ENCODE measurements at regions of chr14 and their contacts with region 1.

Region 1: GRCh38 chr14:65412032-65412846 is at the start of gene FUT8:
- DNase-seq: peak; percentile 88 to 97 (median 94)
- H3K4me3 ChIP-seq: peak within 1 kb of the TSS; percentile 66 to 99 (median 91)
- H3K27ac ChIP-seq: peak within 1 kb of the TSS; percentile 88 to 100 (median 98)
- H3K27me3 ChIP-seq: no peaks in the 10 kb centered on the region
- CTCF ChIP-seq: peak; percentile 17 to 85 (median 72)
- total RNA-seq, gene FUT8: 73.3 to 174 (median 107) TPM

Region 2: GRCh38 chr14:64986578-64987571 is 425.4 kb before region 1 on chr14 and contains the start of gene FNTB:
- intact Hi-C with region 1: loop called in 1 of 2 experiments (anchors 5 kb)
- DNase-seq: peak; percentile 87 to 97 (median 96)
- H3K4me3 ChIP-seq: peak within 1 kb of the TSS; percentile 51 to 97 (median 85)
- H3K27ac ChIP-seq: peak within 1 kb of the TSS; percentile 72 to 98 (median 91)
- H3K27me3 ChIP-seq: no peaks in the 10 kb centered on the region
- CTCF ChIP-seq: peak; percentile 67 to 99 (median 94)
- total RNA-seq, gene FNTB: 19.3 to 93.3 (median 34.4) TPM

Region 3: GRCh38 chr14:65164068-65164824 is 248.0 kb before region 1 on chr14:
- intact Hi-C with region 1: loop called in 1 of 2 experiments (anchors 1 kb)
- DNase-seq: peak in 1 of 10 donors; percentile 24
- H3K4me3 ChIP-seq: no peak overlapping the region
- H3K27ac ChIP-seq: peak overlapping the region in 6 of 59 donors; percentile 1 to 47 (median 42)
- H3K27me3 ChIP-seq: no peaks in the 10 kb centered on the region
- CTCF ChIP-seq: peak; percentile 56 to 95 (median 78)

Region 4: DNA sequence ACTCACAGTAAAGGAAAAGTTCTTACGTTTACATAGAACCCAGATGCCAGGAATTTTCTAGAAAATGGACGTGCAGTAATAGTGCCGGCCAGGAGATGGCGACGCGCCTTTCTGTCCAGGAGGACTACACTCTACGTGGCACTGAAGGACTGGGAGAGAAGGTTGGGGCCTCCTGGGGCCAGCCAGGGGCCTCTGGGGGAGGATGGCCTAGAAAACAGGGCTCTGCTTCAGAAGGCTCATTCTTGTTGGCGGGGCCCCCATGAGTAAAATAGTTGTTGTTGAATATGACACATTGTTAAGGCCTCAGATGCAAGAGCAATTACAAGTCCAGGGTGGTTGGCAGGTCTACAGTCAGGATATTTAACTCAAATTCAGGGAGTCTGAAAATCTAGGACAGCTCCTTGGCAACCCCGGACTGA is 189.8 kb before region 1 on chr14:
- intact Hi-C with region 1: loop called (anchors 2 to 5 kb)
- DNase-seq: peak in 7 of 10 donors; percentile 48 to 72 (median 64)
- H3K4me3 ChIP-seq: no peak overlapping the region
- H3K27ac ChIP-seq: peak overlapping the region in 58 of 59 donors; percentile 6 to 100 (median 98)
- H3K27me3 ChIP-seq: no peaks in the 10 kb centered on the region
- CTCF ChIP-seq: peak; percentile 41 to 83 (median 69)

Region 5: DNA sequence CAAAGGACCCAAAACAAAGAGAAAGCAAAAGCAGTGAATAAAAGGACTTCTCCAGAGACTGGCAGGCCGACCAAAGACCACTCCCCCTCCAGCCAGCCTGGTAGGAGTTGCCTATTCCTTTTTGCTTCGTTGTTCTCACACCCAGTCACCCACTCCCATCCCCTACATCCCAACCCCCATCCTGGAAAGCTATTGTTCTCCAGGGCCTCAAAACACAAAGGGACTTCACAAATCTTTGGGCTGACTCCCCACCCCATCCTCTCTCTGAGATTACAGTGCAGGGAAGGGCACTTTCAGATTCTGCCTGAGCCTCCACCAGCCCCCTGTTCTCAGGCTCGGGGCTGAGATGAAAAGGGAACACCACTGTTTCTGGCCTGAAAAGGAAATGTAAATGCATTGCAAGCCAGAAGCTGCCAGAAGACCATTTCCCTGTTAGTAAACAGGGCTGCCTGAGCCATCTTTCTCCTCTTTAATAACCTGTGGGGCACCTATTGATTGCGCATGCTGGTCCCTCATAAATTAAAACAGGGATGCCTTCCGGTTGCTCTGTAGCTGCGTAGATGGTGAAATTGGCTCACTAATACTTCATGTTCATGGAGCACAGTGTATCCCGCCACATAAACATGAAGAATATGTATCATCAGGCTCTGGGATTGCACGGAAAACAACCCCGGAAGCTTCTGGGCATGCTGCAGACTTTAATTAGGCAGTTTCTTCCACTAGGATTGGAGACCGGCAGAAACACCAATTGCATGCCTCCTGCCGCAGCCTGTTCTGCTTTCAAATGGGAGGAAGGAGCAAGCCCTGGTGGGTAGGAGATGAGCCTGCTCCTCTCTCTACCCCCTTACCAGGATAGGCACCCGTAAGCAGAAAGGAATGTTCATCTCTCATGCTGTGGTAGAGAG is 130.0 kb before region 1 on chr14:
- intact Hi-C with region 1: loop called (anchors 1 kb)
- DNase-seq: peak; percentile 17 to 88 (median 80)
- H3K4me3 ChIP-seq: peak overlapping the region; percentile 25 to 69 (median 47)
- H3K27ac ChIP-seq: peak overlapping the region; percentile 83 to 100 (median 96)
- H3K27me3 ChIP-seq: no peaks in the 10 kb centered on the region
- CTCF ChIP-seq: peak in 10 of 56 donors; percentile 4 to 29 (median 10)

Region 6: DNA sequence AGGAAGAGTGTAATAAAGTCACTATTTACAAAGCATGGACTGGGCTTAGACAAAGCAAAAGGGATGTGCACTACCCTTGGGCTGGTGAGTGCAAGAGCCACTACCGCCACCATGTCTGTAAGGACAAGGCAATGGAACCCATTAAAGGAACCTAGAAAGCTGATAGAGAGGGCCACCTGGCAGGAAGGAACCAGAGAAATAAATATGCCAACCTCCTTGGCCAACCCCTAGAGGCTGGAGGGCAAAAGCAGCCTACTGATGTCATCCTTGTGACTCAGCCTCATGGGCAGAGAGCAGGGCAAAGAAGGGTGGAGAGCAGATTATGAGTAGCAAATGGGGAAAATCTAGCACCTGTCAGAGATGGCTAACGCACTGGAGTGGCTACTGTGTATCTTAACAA is 59.2 kb before region 1 on chr14:
- intact Hi-C with region 1: no loop called
- DNase-seq: no peak
- H3K4me3 ChIP-seq: no peak overlapping the region
- H3K27ac ChIP-seq: peak overlapping the region in 5 of 59 donors; percentile 2 to 54 (median 11)
- H3K27me3 ChIP-seq: no peaks in the 10 kb centered on the region
- CTCF ChIP-seq: no peak

Region 7: DNA sequence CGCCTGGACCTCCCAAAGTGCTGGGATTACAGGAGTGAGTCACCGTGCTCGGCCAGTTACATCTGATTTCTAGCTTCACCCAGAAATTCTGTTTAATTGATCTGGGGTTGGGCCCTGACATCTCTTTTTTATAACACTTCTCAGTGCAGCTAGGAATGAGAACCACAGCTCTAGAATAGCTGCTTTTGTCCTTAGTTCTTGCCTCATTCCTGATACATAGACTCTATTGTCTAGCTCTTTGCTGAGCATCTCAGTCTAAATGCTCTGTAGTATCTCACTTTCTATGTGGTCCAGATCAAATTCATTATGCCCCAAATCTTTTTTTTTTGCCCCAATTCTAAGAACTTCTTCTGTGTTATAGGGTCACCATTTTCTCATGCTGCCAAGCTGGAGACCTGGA is 29.7 kb before region 1 on chr14:
- intact Hi-C with region 1: no loop called
- DNase-seq: no peak
- H3K4me3 ChIP-seq: peak overlapping the region in 1 of 59 donors; percentile 11
- H3K27ac ChIP-seq: peak overlapping the region in 58 of 59 donors; percentile 63 to 99 (median 88)
- H3K27me3 ChIP-seq: no peaks in the 10 kb centered on the region
- CTCF ChIP-seq: no peak

Region 8: GRCh38 chr14:65537762-65538161 is 125.5 kb after region 1 on chr14:
- intact Hi-C with region 1: no loop called
- DNase-seq: no peak
- H3K4me3 ChIP-seq: no peak overlapping the region
- H3K27ac ChIP-seq: no peak overlapping the region
- H3K27me3 ChIP-seq: no peaks in the 10 kb centered on the region
- CTCF ChIP-seq: no peak

Region 9: DNA sequence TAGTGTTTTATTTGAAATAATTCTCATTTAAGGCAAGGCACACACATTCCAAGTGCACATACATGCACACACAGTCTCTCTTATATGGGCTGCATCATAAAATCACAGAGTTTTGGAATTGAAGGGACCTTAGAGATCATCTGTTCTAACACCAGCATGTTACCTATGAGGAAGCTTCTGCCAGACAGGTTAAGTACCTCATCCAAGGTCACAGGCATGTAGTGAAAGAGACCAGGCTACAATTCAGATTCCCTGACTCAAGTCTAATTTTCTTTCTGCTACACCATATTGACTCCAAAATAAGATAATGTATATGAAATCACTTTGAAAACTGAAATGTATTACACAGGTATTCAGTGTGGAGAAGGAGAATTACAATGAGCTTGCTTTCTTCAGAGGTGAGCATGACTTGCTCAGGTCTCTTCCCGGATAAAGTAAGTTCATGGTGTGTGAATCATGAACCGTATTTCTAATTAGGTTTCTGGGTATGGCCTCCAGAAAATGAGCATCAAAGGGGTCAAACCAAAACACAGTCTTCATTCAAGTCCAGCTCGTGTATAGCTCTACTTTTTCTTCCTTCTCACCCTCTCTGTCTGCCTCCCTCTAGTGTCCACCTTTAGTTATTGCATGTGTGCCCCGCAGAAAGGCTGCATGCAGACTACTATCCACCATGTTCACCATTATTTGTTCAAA is 412.2 kb after region 1 on chr14:
- intact Hi-C with region 1: loop called (anchors 2 kb)
- DNase-seq: peak in 7 of 10 donors; percentile 29 to 57 (median 46)
- H3K4me3 ChIP-seq: no peak overlapping the region
- H3K27ac ChIP-seq: no peak overlapping the region
- H3K27me3 ChIP-seq: no peaks in the 10 kb centered on the region
- CTCF ChIP-seq: peak; percentile 76 to 97 (median 91)

Region 10: GRCh38 chr14:66070509-66071319 is 658.5 kb after region 1 on chr14:
- intact Hi-C with region 1: loop called in 1 of 2 experiments (anchors 10 kb)
- DNase-seq: peak in 4 of 10 donors; percentile 17 to 66 (median 50)
- H3K4me3 ChIP-seq: peak overlapping the region in 14 of 59 donors; percentile 1 to 40 (median 17)
- H3K27ac ChIP-seq: peak overlapping the region in 1 of 59 donors; percentile 17
- H3K27me3 ChIP-seq: no peaks in the 10 kb centered on the region
- CTCF ChIP-seq: peak in 55 of 56 donors; percentile 46 to 85 (median 75)